GM18951 (cell line): ENCODE measurements at regions of chr7 and their contacts with region 1.

Region 1: GRCh38 chr7:35736725-35737124 is 41.8 kb upstream of the HERPUD2 start:
- POLR2A ChIP-seq: no peak

Region 2: GRCh38 chr7:34849163-34849960 is 887.4 kb before region 1 on chr7:
- in situ Hi-C with region 1: no loop called
- POLR2A ChIP-seq: no peak

Region 3: GRCh38 chr7:35799846-35800717 is 63.4 kb after region 1 on chr7:
- in situ Hi-C with region 1: loop called (anchors 10 kb)
- POLR2A ChIP-seq: peak; percentile 54